Heart right ventricle (tissue), 16 donors: ENCODE measurements at regions of chr2 and their contacts with region 1.

Region 1: GRCh38 chr2:54634564-54635511 is 88.6 kb upstream of the EML6 start:
- DNase-seq: peak; percentile 59 to 86
- ATAC-seq: peak; percentile 72 to 87 (median 84)
- H3K4me3 ChIP-seq: peak overlapping the region in 4 of 10 donors; percentile 2 to 32 (median 12)
- H3K27ac ChIP-seq: peak overlapping the region; percentile 62 to 95 (median 88)
- H3K4me1 ChIP-seq: peaks cover 65 to 100% (median 100%) of the 10 kb centered on the region in 9 donors
- H3K27me3 ChIP-seq: no peaks in the 10 kb centered on the region
- CTCF ChIP-seq: no peak

Region 2: DNA sequence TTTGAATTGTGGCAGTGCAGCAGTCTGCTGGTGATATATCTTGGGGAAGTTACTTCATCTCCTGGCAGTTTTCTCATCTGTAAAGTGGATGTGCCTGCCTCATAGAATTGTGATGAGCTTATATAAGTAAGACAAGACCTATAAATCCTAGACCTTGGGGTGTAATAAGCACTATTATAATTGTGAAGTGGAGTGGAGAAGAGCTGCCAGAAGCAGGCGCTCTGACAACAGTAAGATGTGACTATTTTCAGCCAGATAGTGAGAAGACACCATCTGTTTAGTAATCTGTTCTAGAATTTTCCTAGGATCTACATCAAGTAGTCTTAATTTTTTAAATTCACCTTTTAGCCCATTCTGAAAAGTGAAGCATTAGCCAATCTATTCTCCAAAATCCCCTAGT is 293.2 kb before region 1 on chr2:
- intact Hi-C with region 1: loop called in 1 of 10 experiments (anchors 10 kb)
- DNase-seq: no peak
- ATAC-seq: peak in 7 of 8 donors; percentile 35 to 77 (median 74)
- H3K4me3 ChIP-seq: no peak overlapping the region
- H3K27ac ChIP-seq: peak overlapping the region in 2 of 10 donors; percentile 10 to 13
- H3K4me1 ChIP-seq: peaks cover 0 to 37% (median 24%) of the 10 kb centered on the region in 9 donors
- H3K27me3 ChIP-seq: no peaks in the 10 kb centered on the region
- CTCF ChIP-seq: peak in 6 of 9 donors; percentile 30 to 63 (median 43)

Region 3: DNA sequence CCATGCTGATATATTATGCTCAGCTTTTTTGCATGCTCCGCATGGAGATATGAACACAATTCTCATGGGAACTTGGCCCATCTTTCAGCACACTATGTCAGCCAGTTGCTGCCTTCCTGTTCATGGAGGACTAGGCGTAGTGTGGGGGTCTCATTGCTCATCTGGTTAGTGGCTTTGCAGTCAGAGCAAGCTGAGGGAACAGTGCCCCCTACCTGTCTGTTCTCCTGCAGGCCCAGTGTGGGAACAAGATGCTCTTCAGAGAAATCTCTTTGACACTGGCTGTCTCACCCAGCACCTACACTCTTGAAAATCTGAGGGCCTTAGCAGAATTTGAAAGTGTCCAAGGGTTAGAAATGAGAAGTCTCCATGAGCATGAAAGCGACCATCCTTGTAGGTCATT is 131.6 kb before region 1 on chr2:
- intact Hi-C with region 1: loop called in 1 of 10 experiments (anchors 10 kb)
- DNase-seq: no peak
- ATAC-seq: peak in 4 of 8 donors; percentile 20 to 57 (median 23)
- H3K4me3 ChIP-seq: no peak overlapping the region
- H3K27ac ChIP-seq: peak overlapping the region in 3 of 10 donors; percentile 14 to 72 (median 24)
- H3K4me1 ChIP-seq: peaks cover 49 to 100% (median 99%) of the 10 kb centered on the region in 9 donors
- H3K27me3 ChIP-seq: no peaks in the 10 kb centered on the region
- CTCF ChIP-seq: peak in 8 of 9 donors; percentile 23 to 65 (median 48)

Region 4: DNA sequence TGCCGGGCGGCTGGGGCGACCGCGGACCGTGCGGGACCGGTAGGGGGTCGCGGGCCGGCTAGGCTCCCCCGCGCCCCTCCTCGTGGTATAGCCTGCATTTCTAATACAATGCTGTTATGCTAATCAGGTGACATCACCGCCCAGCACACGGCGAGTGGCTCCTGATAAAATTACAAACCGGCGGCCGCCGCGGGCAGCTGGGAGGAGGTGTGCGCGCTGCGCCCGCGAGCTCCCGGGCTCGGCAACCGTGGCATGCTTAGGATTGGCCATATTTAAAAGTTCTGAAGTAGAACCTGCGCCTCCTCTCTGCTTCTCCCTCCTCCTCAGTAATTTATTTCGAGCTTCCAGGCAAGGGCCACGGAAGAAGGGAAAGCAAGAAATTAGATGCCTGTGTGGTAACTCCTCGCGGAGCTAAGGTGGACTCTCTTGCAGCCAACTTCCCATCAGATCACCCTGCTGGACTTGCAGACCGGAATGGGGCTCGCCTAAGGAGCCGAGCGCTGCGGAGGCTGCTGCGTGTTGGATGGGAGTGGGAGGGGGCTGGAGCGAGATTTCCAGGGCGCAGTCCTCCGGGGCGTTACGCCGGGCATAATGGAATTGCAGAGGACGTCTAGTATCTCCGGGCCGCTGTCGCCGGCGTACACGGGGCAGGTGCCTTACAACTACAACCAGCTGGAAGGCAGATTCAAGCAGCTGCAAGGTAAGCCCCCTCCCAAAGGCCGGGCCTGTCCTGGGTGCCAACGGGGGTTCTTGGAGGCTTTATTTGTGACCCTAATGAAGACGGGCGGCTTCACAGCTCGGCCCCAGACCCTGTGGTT is 76.4 kb before region 1 on chr2:
- intact Hi-C with region 1: loop called in 1 of 10 experiments (anchors 10 kb)
- DNase-seq: peak; percentile 46 to 53
- ATAC-seq: peak; percentile 32 to 65 (median 48)
- H3K4me3 ChIP-seq: peak overlapping the region in 9 of 10 donors; percentile 33 to 68 (median 50)
- H3K27ac ChIP-seq: peak overlapping the region; percentile 39 to 94 (median 83)
- H3K4me1 ChIP-seq: peaks cover 17 to 98% (median 90%) of the 10 kb centered on the region in 9 donors
- H3K27me3 ChIP-seq: no peaks in the 10 kb centered on the region
- CTCF ChIP-seq: no peak

Region 5: GRCh38 chr2:54673501-54673998 is 38.7 kb after region 1 on chr2:
- intact Hi-C with region 1: loop called in 1 of 10 experiments (anchors 5 kb)
- DNase-seq: peak; percentile 86 to 94
- ATAC-seq: peak; percentile 82 to 93 (median 90)
- H3K4me3 ChIP-seq: peak overlapping the region in 6 of 10 donors; percentile 4 to 33 (median 16)
- H3K27ac ChIP-seq: peak overlapping the region; percentile 74 to 98 (median 90)
- H3K4me1 ChIP-seq: peaks cover 13 to 65% (median 55%) of the 10 kb centered on the region in 9 donors
- H3K27me3 ChIP-seq: no peaks in the 10 kb centered on the region
- CTCF ChIP-seq: peak in 1 of 9 donors; percentile 18